Posterior cingulate gyrus (tissue), 11 donors: ENCODE measurements at regions of chr10 and their contacts with region 1.

Region 1: GRCh38 chr10:102904346-102904745 is 13.7 kb upstream of the CNNM2 start:
- DNase-seq: no peak

Region 2: GRCh38 chr10:102729029-102730026 is 175.0 kb before region 1 on chr10:
- intact Hi-C with region 1: loop called (anchors 5 kb)
- DNase-seq: peak; percentile 67 to 98 (median 91)

Region 3: DNA sequence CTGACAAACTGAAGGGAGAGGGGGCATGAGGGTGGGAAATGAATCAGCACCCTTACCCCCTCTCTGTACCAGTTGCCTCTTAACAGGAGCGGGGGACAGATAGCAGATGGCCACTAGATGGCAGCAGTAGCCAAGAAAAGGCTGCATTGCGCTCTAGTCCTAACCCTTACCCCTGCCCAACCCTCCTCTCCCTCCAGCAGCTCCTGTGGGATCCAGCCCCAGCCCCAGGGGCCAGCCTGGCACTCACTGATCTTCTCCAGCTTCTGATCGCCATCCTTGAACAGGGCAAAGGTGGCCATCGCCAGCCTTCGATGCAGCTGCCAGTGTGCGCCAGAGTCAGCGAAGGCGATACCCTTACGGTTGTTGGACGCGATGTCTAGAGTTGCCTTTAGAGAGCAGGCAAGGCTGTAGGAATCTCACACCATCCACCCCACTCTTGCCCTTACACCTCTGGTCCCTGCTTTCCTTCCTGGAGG is 69.3 kb before region 1 on chr10:
- intact Hi-C with region 1: loop called (anchors 1 kb)
- DNase-seq: peak; percentile 47 to 95 (median 76)